Activated CD8-positive, alpha-beta T cell treated with anti-CD3 and anti-CD28 coated beads for 36 hours (primary cell): ENCODE measurements at regions of chr16 and their contacts with region 1.

Region 1: DNA sequence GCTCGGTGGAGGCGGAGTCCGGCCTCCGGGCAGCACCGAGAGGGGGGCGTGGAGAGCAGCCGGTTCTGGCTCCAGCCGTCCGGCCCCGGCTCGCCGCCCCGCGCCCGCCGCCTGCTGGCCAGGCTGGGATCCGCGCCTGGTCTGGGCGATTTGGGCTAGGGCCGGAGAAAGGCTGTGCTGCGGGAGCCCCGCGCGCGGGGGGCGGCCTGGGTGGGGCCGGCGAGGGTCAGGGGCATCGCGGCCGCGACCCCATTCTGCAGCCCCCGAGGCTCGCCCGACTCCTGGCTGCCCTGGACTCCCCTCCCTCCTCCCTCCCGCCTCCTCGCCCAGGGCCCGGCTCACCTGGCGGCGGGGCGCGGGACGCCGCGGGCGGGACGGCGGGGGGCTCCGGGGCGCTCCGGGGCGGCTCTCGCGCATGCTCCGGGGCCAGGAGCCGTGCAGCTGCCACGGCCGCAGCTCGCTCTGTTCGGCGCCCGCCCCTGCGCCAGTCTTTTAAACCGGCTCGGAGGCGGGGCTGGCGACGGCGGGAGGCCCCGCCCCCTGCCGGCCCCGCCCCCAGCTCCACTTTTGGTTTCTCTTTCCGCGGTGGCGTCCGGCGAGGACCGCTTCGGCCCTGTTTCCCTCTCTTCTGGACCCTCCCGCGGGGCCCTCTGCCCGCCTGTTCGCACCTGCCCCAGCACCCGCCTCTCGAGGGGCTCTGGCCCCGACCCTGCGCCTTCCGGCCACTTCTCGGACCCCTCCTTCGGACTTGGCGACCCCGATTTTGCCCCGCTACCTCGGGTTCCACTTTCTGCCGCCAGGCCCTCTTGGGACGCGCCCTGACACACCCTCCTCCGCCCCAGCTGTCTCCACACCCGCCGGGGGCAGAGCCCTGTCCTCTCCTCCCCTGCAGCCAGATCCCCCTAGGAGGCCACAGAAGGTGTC is at the start of gene SOCS1:
- DNase-seq: peak; percentile 87
- ATAC-seq: peak; percentile 65
- H3K4me3 Mint-ChIP-seq: peak within 1 kb of the TSS; percentile 97
- H3K27ac Mint-ChIP-seq: peak within 1 kb of the TSS; percentile 94
- H3K4me1 Mint-ChIP-seq: peaks cover 41% of the 10 kb centered on the region
- H3K27me3 Mint-ChIP-seq: no peaks in the 10 kb centered on the region
- CTCF ChIP-seq: peak; percentile 84
- total RNA-seq, gene SOCS1: 75.7 to 75.8 TPM

Region 2: DNA sequence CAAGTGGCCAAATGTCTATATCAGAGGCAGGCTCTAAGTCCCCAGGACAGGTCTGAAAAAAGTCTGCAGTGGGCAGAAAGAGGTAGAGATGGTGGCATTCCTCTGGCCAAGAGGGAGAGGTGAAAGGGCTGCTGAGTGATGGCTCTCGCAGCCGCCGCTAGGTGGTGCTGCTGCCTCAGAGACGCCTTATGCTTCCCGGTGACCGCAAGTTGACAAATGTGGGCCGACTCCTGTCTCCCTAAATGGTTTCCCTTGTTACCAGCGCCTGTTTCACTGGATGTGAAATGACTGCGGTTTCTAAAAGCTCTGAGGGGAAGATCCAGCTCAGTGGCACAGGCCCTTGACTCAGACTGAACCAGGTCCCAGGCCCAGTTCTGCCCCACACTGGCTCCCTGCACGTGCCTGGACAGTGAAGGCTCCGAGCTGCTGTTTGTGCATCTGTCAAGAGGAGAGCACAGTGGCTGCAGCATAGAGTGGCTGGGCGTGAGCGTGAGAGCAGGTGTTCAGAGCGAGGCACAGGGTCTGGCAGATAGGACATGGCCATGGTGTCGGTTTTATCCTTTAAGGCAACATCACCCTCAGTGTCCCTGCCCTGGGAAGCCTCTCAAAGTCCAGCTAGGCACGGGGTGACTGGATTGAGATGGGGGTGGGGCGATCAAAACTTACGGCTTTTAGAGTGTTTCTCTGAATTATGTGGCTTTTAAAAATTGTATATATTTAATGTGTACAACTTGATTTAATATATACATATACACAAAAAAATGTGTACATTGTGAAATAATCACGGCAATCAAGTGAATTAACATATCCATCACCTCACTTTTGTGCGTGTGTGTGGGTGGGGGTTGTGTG is 291.7 kb before region 1 on chr16:
- CTCF ChIA-PET with region 1: interaction called, 80 read pairs
- POLR2A ChIA-PET with region 1: interaction called, 94 read pairs
- intact Hi-C with region 1: no loop called
- DNase-seq: peak; percentile 85
- ATAC-seq: peak; percentile 47
- H3K4me3 Mint-ChIP-seq: no peak overlapping the region
- H3K27ac Mint-ChIP-seq: peak overlapping the region; percentile 92
- H3K4me1 Mint-ChIP-seq: peaks cover 42% of the 10 kb centered on the region
- H3K27me3 Mint-ChIP-seq: no peaks in the 10 kb centered on the region
- CTCF ChIP-seq: peak; percentile 99

Region 3: GRCh38 chr16:11051879-11052808 is 203.9 kb before region 1 on chr16:
- CTCF ChIA-PET with region 1: interaction called, 8 read pairs
- POLR2A ChIA-PET with region 1: interaction called, 68 read pairs
- intact Hi-C with region 1: loop called (anchors 2 kb)
- DNase-seq: peak; percentile 93
- ATAC-seq: peak; percentile 86
- H3K4me3 Mint-ChIP-seq: peak overlapping the region; percentile 8
- H3K27ac Mint-ChIP-seq: peak overlapping the region; percentile 97
- H3K4me1 Mint-ChIP-seq: peaks cover 69% of the 10 kb centered on the region
- H3K27me3 Mint-ChIP-seq: no peaks in the 10 kb centered on the region
- CTCF ChIP-seq: no peak

Region 4: GRCh38 chr16:11161974-11162373 is 94.0 kb before region 1 on chr16:
- CTCF ChIA-PET with region 1: interaction called, 9 read pairs
- POLR2A ChIA-PET with region 1: interaction called, 18 read pairs
- intact Hi-C with region 1: no loop called
- DNase-seq: no peak
- ATAC-seq: no peak
- H3K4me3 Mint-ChIP-seq: no peak overlapping the region
- H3K27ac Mint-ChIP-seq: peak overlapping the region; percentile 86
- H3K4me1 Mint-ChIP-seq: peaks cover 55% of the 10 kb centered on the region
- H3K27me3 Mint-ChIP-seq: no peaks in the 10 kb centered on the region
- CTCF ChIP-seq: no peak

Region 5: GRCh38 chr16:11232852-11233726 is 22.9 kb before region 1 on chr16:
- CTCF ChIA-PET with region 1: interaction called, 13 read pairs
- POLR2A ChIA-PET with region 1: interaction called, 146 read pairs
- intact Hi-C with region 1: no loop called
- DNase-seq: peak; percentile 97
- ATAC-seq: peak; percentile 81
- H3K4me3 Mint-ChIP-seq: peak overlapping the region; percentile 63
- H3K27ac Mint-ChIP-seq: peak overlapping the region; percentile 98
- H3K4me1 Mint-ChIP-seq: peaks cover 75% of the 10 kb centered on the region
- H3K27me3 Mint-ChIP-seq: no peaks in the 10 kb centered on the region
- CTCF ChIP-seq: no peak

Region 6: GRCh38 chr16:11325404-11326083 is 69.5 kb after region 1 on chr16:
- CTCF ChIA-PET with region 1: no interaction called
- POLR2A ChIA-PET with region 1: interaction called, 17 read pairs
- intact Hi-C with region 1: no loop called
- DNase-seq: peak; percentile 55
- ATAC-seq: peak; percentile 38
- H3K4me3 Mint-ChIP-seq: no peak overlapping the region
- H3K27ac Mint-ChIP-seq: peak overlapping the region; percentile 40
- H3K4me1 Mint-ChIP-seq: peaks cover 50% of the 10 kb centered on the region
- H3K27me3 Mint-ChIP-seq: no peaks in the 10 kb centered on the region
- CTCF ChIP-seq: no peak

Region 7: DNA sequence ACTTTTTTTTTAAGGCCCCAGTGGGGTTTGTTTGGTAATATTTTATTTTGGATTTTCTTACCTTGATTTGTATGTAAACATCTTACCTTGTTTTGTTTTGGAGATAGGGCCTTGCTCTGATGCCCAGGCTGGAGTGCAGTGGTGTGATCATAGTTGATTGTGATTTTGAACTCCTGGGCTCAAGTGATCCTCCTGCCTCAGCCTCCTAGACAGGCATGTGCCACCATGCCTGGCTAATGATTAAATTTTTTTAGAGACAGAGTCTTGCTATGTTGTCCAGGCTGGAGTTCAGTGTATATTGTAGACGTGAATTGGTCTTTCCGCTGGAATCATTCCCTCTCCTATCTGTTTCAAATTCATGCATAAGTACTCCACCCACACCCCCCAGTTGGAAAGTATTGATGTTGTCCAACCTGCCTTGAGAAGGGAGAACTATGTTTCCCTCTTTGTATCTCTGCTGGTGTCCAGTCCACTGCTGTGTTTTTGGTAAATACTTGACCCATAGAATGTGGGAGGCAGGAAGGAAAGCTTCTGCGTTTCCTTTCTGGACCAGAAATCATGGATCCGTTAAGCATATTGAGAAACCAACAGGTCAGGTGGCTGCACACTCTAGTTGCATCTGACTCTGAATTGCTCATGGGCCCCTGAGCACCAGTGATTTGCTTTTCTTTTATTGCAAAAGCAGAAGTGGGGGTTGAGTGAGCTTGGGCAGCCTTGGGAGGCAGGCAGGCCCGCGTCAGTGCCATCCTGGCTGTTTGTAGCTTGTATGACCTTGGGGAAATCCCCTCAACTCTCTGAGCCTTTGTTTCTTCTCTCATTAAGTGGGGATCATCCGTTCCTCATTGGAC is 114.3 kb after region 1 on chr16:
- CTCF ChIA-PET with region 1: interaction called, 21 read pairs
- POLR2A ChIA-PET with region 1: interaction called, 4 read pairs
- intact Hi-C with region 1: no loop called
- DNase-seq: no peak
- ATAC-seq: peak; percentile 24
- H3K4me3 Mint-ChIP-seq: no peak overlapping the region
- H3K27ac Mint-ChIP-seq: no peak overlapping the region
- H3K4me1 Mint-ChIP-seq: peaks cover 8% of the 10 kb centered on the region
- H3K27me3 Mint-ChIP-seq: no peaks in the 10 kb centered on the region
- CTCF ChIP-seq: no peak